B cell (primary cell): ENCODE measurements at regions of chr15 and their contacts with region 1.

Region 1: DNA sequence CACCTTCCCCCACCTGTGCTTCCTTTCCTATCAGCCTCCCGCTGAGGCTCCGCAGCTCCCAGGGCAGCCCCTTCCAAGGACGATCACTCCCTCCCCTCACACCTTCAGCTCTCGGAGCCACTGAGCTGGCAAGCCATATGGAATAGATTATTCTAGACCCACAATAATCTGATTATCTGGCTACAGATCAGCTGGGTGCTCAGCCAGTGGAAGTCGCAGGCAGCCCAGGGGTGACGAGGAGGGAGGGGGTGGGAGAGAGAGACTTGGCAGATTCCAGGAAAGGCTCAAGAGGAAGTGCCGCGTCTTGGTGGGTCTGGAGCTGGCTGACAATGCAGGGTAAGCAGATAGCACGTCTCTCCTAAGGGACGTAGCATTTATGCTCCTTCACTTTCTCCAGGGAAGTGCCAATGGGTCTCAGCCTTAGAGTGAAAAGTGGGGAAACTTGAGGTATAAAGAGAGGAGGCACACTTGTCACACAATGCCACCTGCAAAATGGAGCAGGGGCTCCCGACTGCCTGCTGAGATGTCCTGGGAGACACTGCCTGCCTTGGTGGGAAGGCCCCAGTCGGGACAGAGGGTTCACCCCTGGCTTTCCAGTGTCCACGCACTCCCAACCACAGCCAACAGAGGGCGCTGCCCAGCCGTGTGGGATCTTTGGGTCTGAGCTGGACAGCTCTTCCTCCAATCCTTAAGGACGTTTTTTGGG is 9.4 kb upstream of the MESP1 start:
- DNase-seq: peak; percentile 75
- ATAC-seq: peak; percentile 81
- H3K4me3 ChIP-seq: no peak overlapping the region
- H3K4me3 Mint-ChIP-seq: no peak overlapping the region
- H3K27ac ChIP-seq: no peak overlapping the region
- H3K27ac Mint-ChIP-seq: no peak overlapping the region
- H3K4me1 ChIP-seq: peaks cover 0 to 8% of the 10 kb centered on the region in 2 donors
- H3K4me1 Mint-ChIP-seq: no peaks in the 10 kb centered on the region
- H3K27me3 ChIP-seq: no peaks in the 10 kb centered on the region
- H3K27me3 Mint-ChIP-seq: peaks cover 7% of the 10 kb centered on the region
- CTCF ChIP-seq: peak; percentile 86

Region 2: DNA sequence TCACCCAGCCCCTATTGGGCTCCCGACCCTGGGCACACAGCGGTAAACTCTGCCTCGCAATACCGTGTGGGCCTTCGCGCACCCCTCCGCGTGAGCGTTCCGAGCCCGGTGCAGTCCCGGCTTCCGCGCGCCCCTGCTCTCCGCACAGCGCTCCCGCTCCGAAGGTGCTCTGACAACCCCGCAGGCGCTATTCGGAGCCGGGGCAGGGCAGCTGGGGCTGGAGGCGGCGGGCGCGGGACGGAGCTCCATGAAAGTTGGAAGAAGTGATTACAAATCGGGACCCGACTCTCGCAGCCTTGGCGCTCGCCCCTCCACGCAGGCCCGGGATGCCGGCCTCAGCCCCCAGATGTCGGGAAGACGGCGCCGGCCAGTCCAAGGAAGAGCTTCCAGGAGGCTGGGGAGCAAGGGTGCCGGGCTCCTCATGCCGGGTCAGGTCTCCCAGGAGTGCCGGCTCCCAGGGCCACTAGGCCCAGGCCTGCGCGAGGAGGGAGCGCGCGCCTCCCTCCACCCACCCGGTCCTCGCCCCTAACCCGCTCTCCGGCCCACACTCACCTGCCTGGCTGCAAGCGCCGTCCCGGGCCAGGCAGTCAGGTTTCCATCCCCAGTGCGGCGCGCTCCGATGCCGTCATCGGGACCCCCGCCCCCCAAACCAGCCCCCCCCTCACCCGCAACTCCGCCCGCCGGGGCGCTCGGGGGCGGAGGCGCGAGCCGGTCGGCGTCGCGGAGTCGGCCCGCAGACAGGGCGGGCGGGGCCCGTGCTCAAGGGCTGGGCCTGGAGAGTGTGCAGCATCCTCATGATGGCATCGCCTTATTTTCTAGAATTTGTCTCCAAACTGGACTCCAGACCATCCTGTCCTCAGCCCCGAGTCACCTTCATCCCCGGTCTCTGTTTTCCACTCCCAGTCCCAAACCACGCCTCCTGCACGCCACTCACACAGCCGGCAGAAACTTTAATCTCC is 105.3 kb before region 1 on chr15 and contains the start of gene KIF7:
- CTCF ChIA-PET with region 1: no interaction called
- POLR2A ChIA-PET with region 1: no interaction called
- intact Hi-C with region 1: no loop called
- DNase-seq: no peak
- ATAC-seq: no peak
- H3K4me3 ChIP-seq: peak within 1 kb of the TSS in 3 of 5 experiments; percentile 5 to 23 (median 15)
- H3K4me3 Mint-ChIP-seq: peak within 1 kb of the TSS; percentile 78
- H3K27ac ChIP-seq: no peak within 1 kb of the TSS
- H3K27ac Mint-ChIP-seq: no peak within 1 kb of the TSS
- H3K4me1 ChIP-seq: peaks cover 10% of the 10 kb centered on the region in 2 donors
- H3K4me1 Mint-ChIP-seq: peaks cover 11% of the 10 kb centered on the region
- H3K27me3 ChIP-seq: peaks cover 0 to 28% (median 17%) of the 10 kb centered on the region in 4 experiments
- H3K27me3 Mint-ChIP-seq: peaks cover 48% of the 10 kb centered on the region
- CTCF ChIP-seq: no peak
- total RNA-seq, gene KIF7: not detected in 2 replicates

Region 3: GRCh38 chr15:89693686-89694085 is 66.8 kb before region 1 on chr15:
- CTCF ChIA-PET with region 1: no interaction called
- POLR2A ChIA-PET with region 1: no interaction called
- intact Hi-C with region 1: no loop called
- DNase-seq: no peak
- ATAC-seq: no peak
- H3K4me3 ChIP-seq: no peak overlapping the region
- H3K4me3 Mint-ChIP-seq: no peak overlapping the region
- H3K27ac ChIP-seq: no peak overlapping the region
- H3K27ac Mint-ChIP-seq: no peak overlapping the region
- H3K4me1 ChIP-seq: peaks cover 4 to 12% of the 10 kb centered on the region in 2 donors
- H3K4me1 Mint-ChIP-seq: peaks cover 13% of the 10 kb centered on the region
- H3K27me3 ChIP-seq: no peaks in the 10 kb centered on the region
- H3K27me3 Mint-ChIP-seq: no peaks in the 10 kb centered on the region
- CTCF ChIP-seq: no peak

Region 4: DNA sequence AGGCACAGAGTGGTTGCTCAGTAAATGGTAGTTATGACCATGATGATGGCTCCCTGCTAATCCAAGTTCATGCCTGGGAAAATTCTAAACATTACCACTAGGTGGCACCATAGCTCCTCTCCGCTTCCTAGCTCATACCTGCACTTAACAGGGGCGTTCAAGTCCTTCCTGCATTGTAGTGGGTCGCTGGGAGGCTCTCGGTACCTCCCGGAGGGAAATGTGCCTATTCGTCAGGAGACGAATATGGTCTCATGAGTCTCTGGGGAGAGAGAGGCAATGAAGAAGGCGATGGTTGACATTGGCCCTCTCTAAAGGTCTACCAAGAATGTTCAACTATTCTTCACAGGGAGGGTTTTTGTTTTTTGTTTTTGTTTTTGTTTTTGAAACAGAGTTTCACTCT is 20.3 kb before region 1 on chr15:
- CTCF ChIA-PET with region 1: interaction called, 23 read pairs
- POLR2A ChIA-PET with region 1: no interaction called
- intact Hi-C with region 1: no loop called
- DNase-seq: peak; percentile 82
- ATAC-seq: peak; percentile 87
- H3K4me3 ChIP-seq: no peak overlapping the region
- H3K4me3 Mint-ChIP-seq: peak overlapping the region; percentile 41
- H3K27ac ChIP-seq: no peak overlapping the region
- H3K27ac Mint-ChIP-seq: no peak overlapping the region
- H3K4me1 ChIP-seq: peaks cover 0 to 2% of the 10 kb centered on the region in 2 donors
- H3K4me1 Mint-ChIP-seq: peaks cover 3% of the 10 kb centered on the region
- H3K27me3 ChIP-seq: peaks cover 0 to 4% (median 0%) of the 10 kb centered on the region in 4 experiments
- H3K27me3 Mint-ChIP-seq: peaks cover 25% of the 10 kb centered on the region
- CTCF ChIP-seq: peak; percentile 96

Region 5: DNA sequence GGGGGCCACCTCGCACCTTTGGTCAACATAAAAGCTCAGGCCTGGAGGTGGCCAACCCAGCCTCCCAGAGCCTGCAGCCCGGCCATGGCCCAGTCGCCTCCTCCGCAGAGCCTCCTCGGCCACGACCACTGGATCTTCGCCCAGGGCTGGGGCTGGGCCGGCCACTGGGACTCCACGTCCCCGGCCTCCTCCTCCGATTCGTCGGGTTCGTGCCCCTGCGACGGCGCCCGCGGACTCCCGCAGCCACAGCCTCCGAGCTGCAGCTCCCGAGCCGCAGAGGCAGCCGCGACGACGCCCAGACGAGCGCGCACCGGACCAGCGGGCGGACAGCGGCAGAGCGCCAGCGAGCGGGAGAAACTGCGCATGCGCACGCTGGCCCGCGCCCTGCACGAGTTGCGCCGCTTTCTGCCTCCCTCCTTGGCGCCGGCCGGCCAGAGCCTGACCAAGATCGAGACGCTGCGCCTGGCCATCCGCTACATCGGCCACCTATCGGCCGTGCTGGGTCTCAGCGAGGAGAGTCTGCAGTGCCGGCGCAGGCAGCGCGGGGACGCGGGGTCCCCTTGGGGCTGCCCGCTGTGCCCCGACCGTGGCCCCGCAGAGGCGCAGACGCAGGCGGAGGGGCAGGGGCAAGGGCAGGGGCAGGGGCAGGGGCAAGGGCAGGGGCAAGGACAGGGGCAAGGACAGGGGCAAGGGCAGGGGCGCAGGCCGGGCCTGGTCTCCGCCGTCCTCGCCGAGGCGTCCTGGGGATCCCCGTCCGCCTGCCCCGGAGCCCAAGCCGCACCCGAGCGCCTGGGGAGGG is 16.0 kb after region 1 on chr15 and contains the start of gene MESP2:
- CTCF ChIA-PET with region 1: interaction called, 24 read pairs
- POLR2A ChIA-PET with region 1: no interaction called
- intact Hi-C with region 1: no loop called
- DNase-seq: peak; percentile 68
- ATAC-seq: peak; percentile 62
- H3K4me3 ChIP-seq: peak within 1 kb of the TSS in 4 of 5 experiments; percentile 21 to 57 (median 50)
- H3K4me3 Mint-ChIP-seq: peak within 1 kb of the TSS; percentile 81
- H3K27ac ChIP-seq: no peak within 1 kb of the TSS
- H3K27ac Mint-ChIP-seq: peak within 1 kb of the TSS; percentile 41
- H3K4me1 ChIP-seq: peaks cover 22 to 27% of the 10 kb centered on the region in 2 donors
- H3K4me1 Mint-ChIP-seq: peaks cover 15% of the 10 kb centered on the region
- H3K27me3 ChIP-seq: peaks cover 0 to 31% (median 9%) of the 10 kb centered on the region in 4 experiments
- H3K27me3 Mint-ChIP-seq: peaks cover 2% of the 10 kb centered on the region
- CTCF ChIP-seq: peak; percentile 24
- total RNA-seq, gene MESP2: not detected in 2 replicates

Region 6: GRCh38 chr15:89836255-89837133 is 76.0 kb after region 1 on chr15:
- CTCF ChIA-PET with region 1: interaction called, 3 read pairs
- POLR2A ChIA-PET with region 1: no interaction called
- intact Hi-C with region 1: loop called (anchors 10 kb)
- DNase-seq: no peak
- ATAC-seq: no peak
- H3K4me3 ChIP-seq: no peak overlapping the region
- H3K4me3 Mint-ChIP-seq: no peak overlapping the region
- H3K27ac ChIP-seq: no peak overlapping the region
- H3K27ac Mint-ChIP-seq: peak overlapping the region; percentile 23
- H3K4me1 ChIP-seq: peaks cover 0 to 5% of the 10 kb centered on the region in 2 donors
- H3K4me1 Mint-ChIP-seq: peaks cover 9% of the 10 kb centered on the region
- H3K27me3 ChIP-seq: no peaks in the 10 kb centered on the region
- H3K27me3 Mint-ChIP-seq: no peaks in the 10 kb centered on the region
- CTCF ChIP-seq: no peak

Region 7: DNA sequence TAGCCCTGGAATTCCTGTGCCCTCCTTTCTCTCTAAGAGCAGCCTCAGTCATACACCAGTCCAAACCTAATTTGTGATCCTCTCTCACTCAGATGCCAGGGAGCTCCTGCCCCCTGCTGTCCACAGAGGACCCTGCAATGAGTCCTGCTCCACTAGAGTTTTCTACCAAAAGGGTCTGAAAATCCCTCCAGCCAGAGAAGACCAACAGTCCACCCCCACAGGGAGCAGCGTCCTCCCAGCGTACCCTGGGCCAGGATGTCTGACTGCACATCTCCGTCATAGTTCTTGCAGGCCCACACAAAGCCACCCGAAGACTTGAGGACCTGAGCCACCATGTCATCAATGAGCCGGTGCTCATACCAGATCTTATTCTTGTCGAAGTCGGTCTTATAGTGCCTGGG is 326.4 kb after region 1 on chr15:
- CTCF ChIA-PET with region 1: interaction called, 39 read pairs
- POLR2A ChIA-PET with region 1: no interaction called
- intact Hi-C with region 1: loop called (anchors 1 kb)
- DNase-seq: peak; percentile 63
- ATAC-seq: peak; percentile 73
- H3K4me3 ChIP-seq: no peak overlapping the region
- H3K4me3 Mint-ChIP-seq: no peak overlapping the region
- H3K27ac ChIP-seq: no peak overlapping the region
- H3K27ac Mint-ChIP-seq: peak overlapping the region; percentile 46
- H3K4me1 ChIP-seq: no peaks in the 10 kb centered on the region
- H3K4me1 Mint-ChIP-seq: peaks cover 14% of the 10 kb centered on the region
- H3K27me3 ChIP-seq: no peaks in the 10 kb centered on the region
- H3K27me3 Mint-ChIP-seq: no peaks in the 10 kb centered on the region
- CTCF ChIP-seq: peak; percentile 71